Natural killer cell (primary cell): ENCODE measurements at regions of chr15 and their contacts with region 1.

Region 1: GRCh38 chr15:72487070-72487797 is 13.1 kb downstream of the ARIH1 start:
- DNase-seq: no peak
- ATAC-seq: no peak
- H3K4me3 ChIP-seq: no peak overlapping the region
- H3K4me3 Mint-ChIP-seq: no peak overlapping the region
- H3K27ac ChIP-seq: no peak overlapping the region
- H3K27ac Mint-ChIP-seq: peak overlapping the region in 1 of 2 donors; percentile 1
- H3K4me1 ChIP-seq: peaks cover 3% of the 10 kb centered on the region
- H3K4me1 Mint-ChIP-seq: peaks cover 76 to 77% of the 10 kb centered on the region in 2 donors
- H3K27me3 ChIP-seq: no peaks in the 10 kb centered on the region
- H3K27me3 Mint-ChIP-seq: no peaks in the 10 kb centered on the region
- CTCF ChIP-seq: no peak

Region 2: GRCh38 chr15:72312605-72313447 is 174.4 kb before region 1 on chr15:
- intact Hi-C with region 1: no loop called
- DNase-seq: peak; percentile 53 to 75
- ATAC-seq: peak; percentile 87 to 100 (median 98)
- H3K4me3 ChIP-seq: no peak overlapping the region
- H3K4me3 Mint-ChIP-seq: no peak overlapping the region
- H3K27ac ChIP-seq: no peak overlapping the region
- H3K27ac Mint-ChIP-seq: no peak overlapping the region
- H3K4me1 ChIP-seq: no peaks in the 10 kb centered on the region
- H3K4me1 Mint-ChIP-seq: no peaks in the 10 kb centered on the region
- H3K27me3 ChIP-seq: no peaks in the 10 kb centered on the region
- H3K27me3 Mint-ChIP-seq: no peaks in the 10 kb centered on the region
- CTCF ChIP-seq: peak; percentile 74

Region 3: GRCh38 chr15:72375847-72376581 is 111.2 kb before region 1 on chr15 and contains the start of gene HEXA:
- intact Hi-C with region 1: no loop called
- DNase-seq: peak; percentile 96 to 99
- ATAC-seq: peak; percentile 77 to 92 (median 86)
- H3K4me3 ChIP-seq: peak within 1 kb of the TSS; percentile 90
- H3K4me3 Mint-ChIP-seq: peak within 1 kb of the TSS; percentile 98
- H3K27ac ChIP-seq: peak within 1 kb of the TSS; percentile 86
- H3K27ac Mint-ChIP-seq: peak within 1 kb of the TSS; percentile 96 to 99
- H3K4me1 ChIP-seq: peaks cover 25% of the 10 kb centered on the region
- H3K4me1 Mint-ChIP-seq: peaks cover 35 to 43% of the 10 kb centered on the region in 2 donors
- H3K27me3 ChIP-seq: no peaks in the 10 kb centered on the region
- H3K27me3 Mint-ChIP-seq: no peaks in the 10 kb centered on the region
- CTCF ChIP-seq: no peak
- total RNA-seq, gene HEXA: 154 to 173 (median 172) TPM

Region 4: DNA sequence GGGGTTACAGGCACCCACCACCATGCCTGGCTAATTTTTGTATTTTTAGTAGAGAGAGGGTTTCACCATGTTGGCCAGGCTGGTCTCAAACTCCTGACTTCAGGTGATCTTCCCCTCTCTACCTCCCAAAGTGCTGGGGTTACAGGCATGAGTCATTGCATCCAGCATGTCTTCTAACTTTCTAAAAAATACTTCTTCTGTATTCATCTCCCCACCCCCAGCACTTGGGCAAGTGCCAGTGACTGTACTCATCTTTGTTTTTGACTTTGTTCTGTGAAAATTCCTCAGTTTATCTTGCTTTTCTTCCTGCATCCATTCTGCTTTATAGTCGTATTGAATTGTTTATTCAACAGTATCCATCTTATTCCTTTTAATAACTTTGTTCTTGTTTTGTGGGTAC is 34.4 kb after region 1 on chr15:
- intact Hi-C with region 1: loop called (anchors 5 kb)
- DNase-seq: no peak
- ATAC-seq: no peak
- H3K4me3 ChIP-seq: no peak overlapping the region
- H3K4me3 Mint-ChIP-seq: no peak overlapping the region
- H3K27ac ChIP-seq: no peak overlapping the region
- H3K27ac Mint-ChIP-seq: no peak overlapping the region
- H3K4me1 ChIP-seq: no peaks in the 10 kb centered on the region
- H3K4me1 Mint-ChIP-seq: peaks cover 17 to 23% of the 10 kb centered on the region in 2 donors
- H3K27me3 ChIP-seq: no peaks in the 10 kb centered on the region
- H3K27me3 Mint-ChIP-seq: no peaks in the 10 kb centered on the region
- CTCF ChIP-seq: no peak